Right lobe of liver (tissue), 6 donors: ENCODE measurements at regions of chr17 and their contacts with region 1.

Region 1: DNA sequence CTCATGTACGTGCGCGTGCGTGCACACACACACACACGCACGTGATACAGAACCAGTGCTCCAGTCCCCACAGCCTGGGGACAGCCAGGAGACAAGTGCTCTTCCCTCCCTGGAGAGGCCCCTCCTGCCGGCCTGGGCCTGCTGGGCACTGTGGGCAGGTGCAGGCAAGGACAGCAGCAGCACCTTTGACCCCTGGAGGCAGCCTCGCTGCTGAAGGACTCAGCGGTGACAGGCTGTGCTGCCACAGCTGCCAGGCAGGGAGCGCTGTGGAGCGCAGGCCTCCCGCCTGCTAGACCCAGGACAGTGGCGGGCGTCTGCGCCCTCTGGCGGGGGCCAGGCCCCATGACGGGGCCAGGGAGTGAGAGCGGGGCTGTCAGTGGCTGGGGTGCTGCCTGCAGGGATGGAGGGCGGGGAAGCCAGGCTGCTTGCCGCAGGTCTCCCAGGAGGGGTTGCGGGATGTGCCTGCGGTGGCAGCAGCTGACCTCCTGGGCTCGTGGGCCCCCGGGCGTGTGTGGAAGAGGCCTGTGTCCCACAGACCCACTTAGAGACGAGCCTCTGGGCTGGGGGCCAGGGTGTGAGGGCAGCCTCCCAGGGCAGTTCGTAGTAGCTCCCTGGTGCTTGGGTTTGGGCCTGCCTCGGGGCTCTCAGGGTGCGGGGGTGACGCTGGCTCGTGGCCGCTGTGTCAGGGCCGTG is 63.5 kb upstream of the PVALEF start:
- DNase-seq: peak; percentile 90 to 94 (median 93)
- ATAC-seq: peak; percentile 83 to 91 (median 85)
- H3K4me3 ChIP-seq: no peak overlapping the region
- H3K27ac ChIP-seq: peak overlapping the region in 2 of 3 donors; percentile 41 to 57
- H3K4me1 ChIP-seq: peaks cover 0 to 31% (median 14%) of the 10 kb centered on the region in 4 donors
- H3K27me3 ChIP-seq: no peaks in the 10 kb centered on the region
- CTCF ChIP-seq: peak in 3 of 4 donors; percentile 100
- POLR2A ChIP-seq: no peak

Region 2: GRCh38 chr17:80981062-80981902 is 120.5 kb before region 1 on chr17:
- intact Hi-C with region 1: no loop called
- DNase-seq: no peak
- ATAC-seq: peak in 3 of 4 donors; percentile 13 to 43 (median 40)
- H3K4me3 ChIP-seq: no peak overlapping the region
- H3K27ac ChIP-seq: no peak overlapping the region
- H3K4me1 ChIP-seq: no peaks in the 10 kb centered on the region
- H3K27me3 ChIP-seq: no peaks in the 10 kb centered on the region
- CTCF ChIP-seq: peak; percentile 64 to 77 (median 74)
- POLR2A ChIP-seq: no peak

Region 3: GRCh38 chr17:80991645-80992076 is 110.1 kb before region 1 on chr17 and contains the start of gene CHMP6:
- intact Hi-C with region 1: loop called in 1 of 2 experiments (anchors 10 kb)
- DNase-seq: peak; percentile 78 to 83 (median 80)
- ATAC-seq: peak; percentile 49 to 78 (median 61)
- H3K4me3 ChIP-seq: peak within 1 kb of the TSS; percentile 87 to 98 (median 87)
- H3K27ac ChIP-seq: peak within 1 kb of the TSS; percentile 36 to 73 (median 57)
- H3K4me1 ChIP-seq: peaks cover 0 to 19% (median 10%) of the 10 kb centered on the region in 4 donors
- H3K27me3 ChIP-seq: no peaks in the 10 kb centered on the region
- CTCF ChIP-seq: peak in 3 of 4 donors; percentile 23 to 38 (median 30)
- POLR2A ChIP-seq: peak; percentile 45
- total RNA-seq, gene CHMP6: 13.4 to 27.8 (median 15.6) TPM

Region 4: GRCh38 chr17:81009136-81009535 is 92.6 kb before region 1 on chr17:
- intact Hi-C with region 1: no loop called
- DNase-seq: no peak
- ATAC-seq: no peak
- H3K4me3 ChIP-seq: no peak overlapping the region
- H3K27ac ChIP-seq: no peak overlapping the region
- H3K4me1 ChIP-seq: peaks cover 0 to 8% (median 0%) of the 10 kb centered on the region in 4 donors
- H3K27me3 ChIP-seq: no peaks in the 10 kb centered on the region
- CTCF ChIP-seq: no peak
- POLR2A ChIP-seq: no peak